GM13976 (cell line): ENCODE measurements at regions of chr6 and their contacts with region 1.

Region 1: DNA sequence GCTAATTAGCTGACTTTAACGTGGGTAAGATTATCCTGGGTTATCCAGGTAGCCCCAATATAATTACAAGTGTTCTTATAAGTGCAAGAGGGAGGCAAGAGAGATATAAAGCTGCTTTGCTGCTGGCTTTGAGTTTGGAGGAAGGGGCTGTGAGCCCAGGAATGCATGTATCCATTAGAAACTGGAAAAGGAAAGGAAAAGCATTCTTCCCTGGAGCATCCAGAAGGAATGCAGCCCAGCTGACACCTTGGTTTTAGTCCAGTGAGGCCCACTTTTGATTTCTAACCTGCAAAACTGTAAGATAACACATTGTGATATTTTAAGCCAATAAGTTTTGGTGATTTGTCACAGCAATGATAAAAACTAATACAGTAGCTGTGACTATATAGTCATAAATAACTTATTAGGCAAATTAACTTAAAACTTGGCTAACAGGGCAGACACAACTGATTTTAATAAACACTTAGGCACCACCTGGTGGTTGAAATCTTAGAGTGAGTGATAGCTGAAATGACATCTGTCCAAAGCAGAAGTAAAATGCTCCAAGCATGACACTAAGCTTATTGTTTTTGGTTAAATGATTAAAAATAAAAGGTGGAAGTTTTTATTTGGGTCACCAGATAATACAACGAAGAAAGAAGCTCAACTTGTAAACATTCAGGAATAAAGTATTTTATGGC is 35.6 kb downstream of the ADGRF4 start:
- DNase-seq: peak; percentile 37
- CTCF ChIP-seq: peak; percentile 35

Region 2: DNA sequence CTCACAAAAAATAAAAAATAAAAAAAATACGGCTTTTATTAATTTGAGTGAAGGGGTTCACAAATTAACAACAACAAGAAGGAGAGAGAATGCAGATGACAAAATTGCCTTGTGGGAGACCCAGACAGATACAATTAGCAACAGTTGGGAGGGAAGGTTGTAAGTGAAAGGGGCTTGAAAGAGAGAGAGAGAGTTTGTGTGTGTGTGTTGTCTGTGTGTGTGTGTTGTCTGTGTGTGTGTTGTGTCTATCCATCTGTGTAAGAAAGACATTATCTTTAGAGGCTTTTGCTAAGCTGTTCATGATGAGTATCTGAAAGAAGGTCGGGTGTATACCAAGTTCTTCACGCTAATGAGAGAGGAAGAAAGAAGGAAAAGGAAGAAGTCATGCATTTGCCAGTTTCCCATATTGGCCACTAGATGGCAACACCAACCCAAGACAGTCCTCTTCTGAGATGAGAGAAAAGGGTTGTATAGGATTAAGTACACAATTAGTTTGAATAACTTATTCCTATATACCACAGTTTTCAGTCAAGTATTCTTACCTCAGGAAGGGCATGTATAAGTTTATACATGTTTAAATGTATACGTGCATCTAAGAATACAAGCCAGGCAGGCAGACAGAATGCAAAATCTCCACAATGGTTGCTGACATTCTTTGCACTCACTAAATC is 320.1 kb before region 1 on chr6:
- in situ Hi-C with region 1: loop called (anchors 25 kb)
- DNase-seq: peak; percentile 59
- CTCF ChIP-seq: peak; percentile 81

Region 3: GRCh38 chr6:47483853-47484546 is 250.0 kb before region 1 on chr6:
- in situ Hi-C with region 1: no loop called
- DNase-seq: no peak
- CTCF ChIP-seq: no peak

Region 4: DNA sequence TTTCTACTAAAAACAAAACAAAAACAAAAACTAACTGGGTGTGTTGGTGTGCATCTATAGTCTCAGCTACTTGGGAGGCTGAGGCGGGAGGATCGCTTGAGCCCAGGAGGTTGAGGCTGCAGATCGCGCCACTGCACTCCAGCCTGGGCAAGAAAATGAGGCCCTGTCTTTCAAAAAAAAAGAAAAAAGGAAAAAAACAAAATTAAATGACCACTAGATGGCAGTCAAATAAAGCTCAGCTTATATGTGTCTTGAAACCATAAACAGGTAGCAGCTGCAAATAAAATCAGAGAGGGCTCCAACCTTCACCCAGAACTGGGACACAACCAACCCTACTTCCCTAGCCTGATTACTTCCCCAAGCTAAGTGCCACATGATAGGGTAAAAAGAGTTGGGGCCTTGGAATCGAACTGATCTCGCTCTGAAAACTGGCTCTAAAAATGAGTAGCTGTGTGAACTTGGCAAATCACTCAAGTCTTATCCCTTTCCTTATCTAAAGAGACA is 102.7 kb before region 1 on chr6:
- in situ Hi-C with region 1: loop called (anchors 25 kb)
- DNase-seq: peak; percentile 38
- CTCF ChIP-seq: peak; percentile 25